ENCODE measurements at regions of chr11 and their contacts with region 1.

Region 1: DNA sequence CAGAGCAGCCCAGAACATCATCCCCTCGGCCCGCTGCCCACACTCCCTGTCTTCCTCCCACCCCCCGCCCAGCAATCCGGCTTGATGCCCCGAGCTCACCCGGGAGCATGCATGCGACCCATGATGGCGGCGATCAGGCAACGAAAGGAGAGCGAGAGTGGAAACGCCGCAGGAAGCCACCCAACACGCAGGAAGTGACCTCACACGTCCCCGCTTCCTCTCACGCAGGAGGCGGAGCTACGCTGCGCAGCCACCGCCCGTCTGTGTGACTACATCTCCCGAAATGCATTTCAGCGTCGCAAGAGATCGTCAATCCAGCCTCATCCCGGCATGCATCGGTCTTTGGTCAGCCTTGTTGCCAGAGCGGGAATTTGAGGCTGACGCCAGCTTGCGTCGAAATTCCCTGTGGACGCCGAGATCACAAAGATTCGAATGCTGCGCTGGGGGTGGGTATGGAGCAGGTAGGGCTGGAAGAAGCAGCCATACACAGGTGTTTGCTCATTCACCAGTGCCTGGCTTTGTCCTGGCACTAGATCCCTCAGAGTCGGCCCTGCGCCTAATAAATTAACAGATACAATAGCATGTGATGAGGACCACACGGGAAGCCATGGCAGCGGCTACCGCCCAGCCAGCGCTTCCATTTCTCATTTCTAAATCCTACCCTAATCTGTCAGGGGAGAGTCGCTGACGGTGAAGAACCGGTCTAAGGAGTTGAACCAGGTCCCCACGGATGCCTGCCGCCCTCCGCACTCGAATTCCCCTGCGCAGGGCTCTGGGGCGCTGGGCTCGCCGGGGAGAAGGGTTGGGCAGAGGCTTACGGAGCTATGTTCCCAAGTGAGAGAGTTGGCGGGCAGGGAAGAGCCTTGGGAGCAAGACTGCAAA is at the start of gene RPS13:
- DNase-seq: peak; percentile 97 to 100 (median 98)

Region 2: GRCh38 chr11:16738193-16738946 is 339.4 kb before region 1 on chr11 and contains the start of gene C11orf58:
- intact Hi-C with region 1: loop called (anchors 2 kb)
- DNase-seq: peak; percentile 93 to 99 (median 96)

Region 3: GRCh38 chr11:17207317-17208258 is 129.8 kb after region 1 on chr11 and contains the start of gene PIK3C2A:
- intact Hi-C with region 1: loop called (anchors 2 kb)
- DNase-seq: peak; percentile 92 to 100 (median 97)

Region 4: GRCh38 chr11:17280494-17281127 is 202.8 kb after region 1 on chr11:
- intact Hi-C with region 1: no loop called
- DNase-seq: peak in 1 of 10 donors; percentile 42

Measured in posterior cingulate gyrus (tissue), 11 donors.